Posterior cingulate gyrus (tissue), 11 donors: ENCODE measurements at regions of chr15 and their contacts with region 1.

Region 1: DNA sequence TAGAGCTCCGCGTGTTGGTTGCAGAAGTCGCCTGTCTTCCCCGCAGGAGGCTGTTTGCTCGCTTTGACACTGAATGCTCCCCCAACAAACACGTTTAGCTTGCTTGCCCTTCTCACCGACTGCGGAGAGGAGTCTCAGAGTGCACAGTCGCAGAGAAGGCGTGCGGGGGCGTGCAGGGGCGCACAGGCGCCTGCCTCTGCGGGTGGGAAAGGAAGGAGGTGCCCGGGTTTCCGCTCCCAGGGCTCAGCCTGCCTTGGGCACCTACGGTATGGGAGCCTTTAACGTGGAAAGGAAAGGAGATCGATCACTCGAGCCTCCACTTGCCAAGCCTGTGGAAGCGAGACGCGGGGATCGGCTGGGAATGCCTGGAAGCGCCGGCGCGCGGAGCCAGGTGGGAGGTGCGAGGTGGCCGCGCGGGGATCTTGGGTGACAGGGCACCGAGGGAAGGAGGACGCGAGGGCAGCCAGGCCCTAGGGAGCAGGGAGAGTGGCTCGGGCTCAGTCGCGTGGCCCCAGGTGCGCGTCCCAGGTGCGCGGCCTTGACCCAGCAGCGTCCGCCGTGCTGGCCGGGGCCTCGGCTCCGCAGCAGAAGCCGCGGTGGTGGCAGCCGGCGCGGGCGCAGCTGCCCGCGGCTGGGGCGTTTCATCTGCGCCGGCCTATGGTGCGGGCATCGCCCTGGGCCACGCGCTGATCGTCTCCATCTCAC is at the start of gene FAN1:
- DNase-seq: peak; percentile 85 to 99 (median 92)

Region 2: GRCh38 chr15:30872341-30872748 is 31.3 kb before region 1 on chr15:
- intact Hi-C with region 1: no loop called
- DNase-seq: no peak

Region 3: GRCh38 chr15:30956216-30956803 is 52.7 kb after region 1 on chr15:
- intact Hi-C with region 1: loop called (anchors 5 kb)
- DNase-seq: no peak

Region 4: DNA sequence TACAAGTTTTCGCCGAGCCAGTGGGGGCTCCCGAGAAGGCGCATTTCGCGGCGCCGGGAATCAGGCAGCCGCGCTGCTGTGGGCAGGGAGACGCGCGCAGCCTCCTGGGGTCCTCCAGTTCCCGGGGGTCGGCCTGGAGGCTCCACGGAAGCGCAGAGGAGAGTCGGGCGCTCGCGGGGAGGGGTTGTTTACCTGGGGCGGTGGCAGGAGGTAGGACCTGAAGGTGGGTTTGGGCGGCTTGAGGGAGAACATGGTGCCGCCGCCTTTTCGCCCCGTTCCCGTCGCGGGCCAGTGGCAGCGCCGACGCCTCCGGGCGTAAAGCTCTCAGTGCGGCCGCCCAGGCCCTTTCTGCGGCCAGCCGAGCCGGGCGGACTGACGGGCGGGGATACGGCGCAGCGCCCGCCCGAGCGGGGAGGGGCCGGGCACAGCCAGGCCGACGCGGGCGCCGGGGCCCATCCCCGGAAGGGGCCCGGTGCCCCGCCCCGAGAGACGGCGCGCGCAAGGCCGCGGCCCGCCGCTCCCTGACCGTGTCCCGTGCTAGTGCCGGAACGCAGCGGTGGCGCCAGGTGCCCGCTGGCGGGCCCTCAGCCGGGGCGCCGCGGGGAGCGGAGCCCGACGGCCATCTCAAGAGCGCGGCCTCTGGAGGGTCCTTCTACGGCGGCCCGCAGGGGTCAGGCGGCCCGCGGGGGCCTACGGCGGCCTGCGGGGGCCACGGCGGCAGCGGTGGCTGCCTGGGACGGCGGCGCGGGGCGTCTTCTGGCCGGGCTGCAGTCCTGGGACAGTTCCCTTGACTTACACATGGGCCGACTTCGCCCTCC is 87.8 kb after region 1 on chr15 and contains the start of gene MTMR10:
- intact Hi-C with region 1: loop called (anchors 2 kb)
- DNase-seq: peak; percentile 41 to 95 (median 65)